ENCODE measurements at regions of chr15 and their contacts with region 1.

Region 1: GRCh38 chr15:47473832-47474231 is 243.5 kb upstream of the SEMA6D start:
- DNase-seq: peak in 1 of 3 donors; percentile 5
- ATAC-seq: no peak
- H3K4me3 ChIP-seq: no peak overlapping the region
- H3K4me1 ChIP-seq: no peaks in the 10 kb centered on the region
- CTCF ChIP-seq: no peak

Region 2: DNA sequence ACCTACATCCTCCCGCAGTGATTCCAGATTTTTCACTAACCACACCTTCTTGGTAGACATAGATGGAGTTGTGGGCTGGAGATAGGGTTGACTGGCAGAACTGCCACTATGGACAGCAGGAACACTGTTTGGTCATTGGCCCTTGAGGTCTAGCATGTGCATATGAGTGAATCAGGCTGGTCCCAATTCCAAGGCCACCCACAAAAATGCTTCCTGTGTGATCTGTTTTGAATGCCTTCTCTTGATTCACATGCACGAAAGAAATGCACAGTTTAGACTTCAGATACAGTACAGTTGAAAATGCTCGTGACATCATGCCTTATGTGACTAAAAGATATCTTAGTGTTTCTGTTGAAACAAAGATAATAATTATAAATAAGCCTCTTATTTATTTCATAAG is 42.3 kb before region 1 on chr15:
- intact Hi-C with region 1: no loop called
- DNase-seq: no peak
- ATAC-seq: no peak
- H3K4me3 ChIP-seq: no peak overlapping the region
- H3K4me1 ChIP-seq: no peaks in the 10 kb centered on the region
- CTCF ChIP-seq: no peak

Region 3: GRCh38 chr15:47523681-47524475 is 50.0 kb after region 1 on chr15:
- intact Hi-C with region 1: no loop called
- DNase-seq: no peak
- ATAC-seq: no peak
- H3K4me3 ChIP-seq: no peak overlapping the region
- H3K4me1 ChIP-seq: no peaks in the 10 kb centered on the region
- CTCF ChIP-seq: no peak

Region 4: DNA sequence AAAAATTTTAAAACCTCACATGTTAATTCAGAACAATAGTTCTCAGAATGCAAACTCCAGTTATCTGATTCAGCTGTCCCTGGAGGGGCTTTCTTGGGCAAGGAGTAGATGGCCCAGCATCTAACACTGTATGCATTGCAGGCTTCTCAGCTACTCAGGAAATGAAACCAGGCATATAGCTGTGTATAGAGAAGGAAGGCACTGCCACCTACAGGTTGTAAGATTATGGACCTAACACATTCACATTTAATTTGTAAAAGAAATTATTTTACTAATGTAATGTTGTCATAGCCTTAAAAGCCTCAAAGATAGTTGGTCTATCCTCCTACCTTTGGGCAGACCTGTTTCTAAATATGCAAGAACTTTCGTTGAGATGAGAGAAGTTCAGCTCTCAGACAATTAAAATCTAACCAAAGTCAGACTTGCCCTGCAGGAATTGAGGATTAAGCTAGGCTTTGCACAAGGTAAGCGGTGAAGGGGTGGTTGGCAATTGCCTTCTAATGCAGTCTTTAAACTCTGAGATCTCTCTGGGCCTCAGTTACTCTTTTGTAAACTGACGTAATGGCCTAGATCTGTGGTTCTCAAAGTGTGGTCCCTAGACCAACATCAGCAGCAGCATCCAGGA is 514.2 kb after region 1 on chr15:
- intact Hi-C with region 1: loop called in 1 of 2 experiments (anchors 10 kb)
- DNase-seq: peak in 1 of 3 donors; percentile 74
- ATAC-seq: peak; percentile 87
- H3K4me3 ChIP-seq: no peak overlapping the region
- H3K4me1 ChIP-seq: no peaks in the 10 kb centered on the region
- CTCF ChIP-seq: peak; percentile 36